ENCODE measurements at regions of chr15 and their contacts with region 1.

Region 1: DNA sequence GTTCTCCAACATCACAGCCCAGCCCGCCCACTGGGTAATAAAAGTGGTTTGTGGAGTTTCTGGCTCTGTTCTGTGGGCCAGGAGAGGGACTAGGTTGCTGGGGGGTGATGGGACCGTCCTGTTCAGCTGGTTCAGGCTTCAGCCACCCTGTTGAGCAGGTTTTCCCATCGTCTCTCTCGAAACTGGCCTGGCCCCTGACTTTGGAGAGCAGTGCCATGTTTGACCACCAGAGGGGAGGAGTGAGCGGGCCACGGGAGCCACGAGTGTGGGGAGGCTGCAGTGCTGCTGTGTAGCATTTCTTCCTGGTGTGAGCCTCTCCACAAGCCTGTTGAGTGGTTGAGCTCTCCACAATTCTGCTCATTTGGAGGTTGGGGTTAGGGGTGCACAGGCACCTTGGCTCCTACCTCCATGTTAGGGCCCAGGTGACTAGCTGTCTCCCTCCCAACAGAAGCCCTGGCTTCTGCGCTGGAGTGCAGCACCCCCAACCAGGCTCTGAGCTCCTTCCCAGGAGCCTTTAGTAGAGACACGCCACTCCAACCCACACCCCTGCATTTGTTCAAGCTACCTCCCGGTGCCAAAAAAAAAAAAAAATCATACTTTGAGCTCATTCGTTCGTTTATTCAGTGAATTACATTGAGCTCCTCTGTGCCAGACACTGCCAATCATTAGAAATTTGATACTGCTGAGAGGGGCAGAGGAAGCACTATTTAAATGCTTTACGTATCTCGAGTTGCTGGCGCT is 13.9 kb downstream of the SPINT1 start:
- DNase-seq: peak; percentile 86
- ATAC-seq: peak; percentile 91
- H3K4me3 Mint-ChIP-seq: no peak overlapping the region
- H3K27ac Mint-ChIP-seq: no peak overlapping the region
- H3K4me1 Mint-ChIP-seq: peaks cover 19% of the 10 kb centered on the region
- H3K27me3 Mint-ChIP-seq: peaks cover 3% of the 10 kb centered on the region

Region 2: DNA sequence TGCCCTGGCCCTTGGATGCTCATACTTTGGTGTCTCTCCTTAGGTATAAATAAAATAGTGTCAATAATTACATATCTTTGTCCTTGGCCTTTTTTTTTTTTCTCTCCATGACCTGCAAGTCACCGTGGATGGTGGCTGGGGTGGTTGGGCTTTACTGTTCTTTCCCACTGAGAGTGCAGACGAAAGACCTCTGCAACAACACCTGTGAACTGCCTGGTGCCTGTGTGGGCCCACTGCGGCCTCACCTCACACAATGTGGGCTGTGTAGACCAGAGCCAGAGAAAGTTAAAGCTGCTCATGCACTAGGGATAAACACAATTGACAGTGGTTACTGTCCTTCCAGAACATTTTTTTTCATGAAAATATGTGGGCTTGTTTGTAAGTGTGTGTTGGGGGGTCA is 331.9 kb before region 1 on chr15:
- CTCF ChIA-PET with region 1: no interaction called
- POLR2A ChIA-PET with region 1: no interaction called
- DNase-seq: no peak
- ATAC-seq: no peak
- H3K4me3 Mint-ChIP-seq: no peak overlapping the region
- H3K27ac Mint-ChIP-seq: no peak overlapping the region
- H3K4me1 Mint-ChIP-seq: no peaks in the 10 kb centered on the region
- H3K27me3 Mint-ChIP-seq: peaks cover 2% of the 10 kb centered on the region

Region 3: DNA sequence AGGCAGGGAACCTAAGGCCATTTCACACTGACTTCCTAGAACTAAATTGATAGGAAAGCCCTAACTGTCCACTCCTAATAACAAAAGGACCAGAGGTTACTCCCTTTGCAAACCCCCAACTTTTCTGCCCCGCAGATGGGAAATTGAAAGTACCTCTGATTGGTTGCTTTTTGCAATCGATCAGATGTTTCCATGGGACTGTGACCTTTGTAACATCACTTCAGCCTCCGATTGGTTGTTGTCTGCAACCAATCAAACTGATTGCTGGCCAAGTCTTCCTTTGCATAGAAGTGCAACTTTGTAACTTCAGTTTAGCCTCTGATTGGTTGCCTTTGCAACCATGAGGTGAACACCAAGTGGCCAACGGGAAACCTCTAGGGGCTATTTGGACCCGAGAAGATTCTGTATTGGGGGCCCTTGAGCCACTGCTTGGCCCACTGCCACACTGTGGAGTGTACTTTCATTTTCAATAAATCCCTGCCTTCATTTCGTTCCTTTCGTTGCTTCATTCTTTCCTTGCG is 275.0 kb before region 1 on chr15:
- CTCF ChIA-PET with region 1: no interaction called
- POLR2A ChIA-PET with region 1: no interaction called
- DNase-seq: no peak
- ATAC-seq: no peak
- H3K4me3 Mint-ChIP-seq: no peak overlapping the region
- H3K27ac Mint-ChIP-seq: no peak overlapping the region
- H3K4me1 Mint-ChIP-seq: peaks cover 5% of the 10 kb centered on the region
- H3K27me3 Mint-ChIP-seq: peaks cover 3% of the 10 kb centered on the region

Region 4: GRCh38 chr15:40684381-40684780 is 173.4 kb before region 1 on chr15:
- CTCF ChIA-PET with region 1: interaction called, 11 read pairs
- POLR2A ChIA-PET with region 1: no interaction called
- DNase-seq: no peak
- ATAC-seq: no peak
- H3K4me3 Mint-ChIP-seq: no peak overlapping the region
- H3K27ac Mint-ChIP-seq: no peak overlapping the region
- H3K4me1 Mint-ChIP-seq: no peaks in the 10 kb centered on the region
- H3K27me3 Mint-ChIP-seq: no peaks in the 10 kb centered on the region

Region 5: DNA sequence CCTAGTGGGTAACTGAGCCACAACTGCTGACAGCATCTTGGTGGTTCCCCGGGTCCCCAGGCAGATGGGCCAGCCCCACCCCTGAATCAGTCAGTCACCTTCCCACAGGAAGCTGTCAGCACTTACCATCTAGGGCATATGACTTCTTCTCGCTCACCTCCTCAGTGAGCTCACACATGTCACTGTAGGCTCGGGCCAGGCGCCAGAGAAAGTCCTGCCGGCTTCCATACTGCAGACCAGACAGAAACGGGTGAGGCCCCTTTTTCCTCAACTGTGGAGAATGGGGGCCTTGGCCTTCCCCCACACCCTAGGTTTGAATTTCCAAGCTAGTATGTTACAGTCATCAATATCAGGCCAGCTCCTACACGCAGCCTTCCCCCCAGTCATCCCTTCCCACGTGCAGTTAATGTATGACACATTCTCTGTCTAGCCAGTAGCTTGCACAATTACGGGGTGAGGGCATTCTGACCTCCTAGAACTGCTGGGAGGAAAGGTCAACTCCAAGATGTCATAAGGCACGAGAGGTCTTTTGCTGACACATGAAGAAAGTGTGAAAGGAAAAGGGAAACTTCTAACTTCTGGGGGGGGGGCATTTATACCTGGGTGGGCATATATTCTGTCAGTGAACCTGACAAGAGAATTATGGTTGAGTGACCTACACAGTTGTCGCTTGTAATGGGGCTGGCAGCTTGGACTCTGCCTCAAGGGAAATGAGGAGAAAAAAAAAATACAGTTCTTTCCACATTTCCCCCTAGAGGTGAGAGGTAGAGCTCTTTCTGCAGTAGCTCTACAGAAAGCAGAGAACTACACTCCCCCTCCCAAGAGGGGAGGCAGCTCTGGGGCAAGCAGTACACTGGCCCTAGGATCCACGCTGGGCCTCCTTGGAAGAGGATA is 113.6 kb before region 1 on chr15:
- CTCF ChIA-PET with region 1: interaction called, 15 read pairs
- POLR2A ChIA-PET with region 1: no interaction called
- DNase-seq: peak; percentile 85
- ATAC-seq: peak; percentile 94
- H3K4me3 Mint-ChIP-seq: peak overlapping the region; percentile 35
- H3K27ac Mint-ChIP-seq: peak overlapping the region; percentile 87
- H3K4me1 Mint-ChIP-seq: peaks cover 45% of the 10 kb centered on the region
- H3K27me3 Mint-ChIP-seq: no peaks in the 10 kb centered on the region

Region 6: GRCh38 chr15:40838776-40839175 is 19.0 kb before region 1 on chr15:
- CTCF ChIA-PET with region 1: interaction called, 79 read pairs
- POLR2A ChIA-PET with region 1: no interaction called
- DNase-seq: no peak
- ATAC-seq: no peak
- H3K4me3 Mint-ChIP-seq: no peak overlapping the region
- H3K27ac Mint-ChIP-seq: no peak overlapping the region
- H3K4me1 Mint-ChIP-seq: peaks cover 4% of the 10 kb centered on the region
- H3K27me3 Mint-ChIP-seq: peaks cover 23% of the 10 kb centered on the region

Region 7: GRCh38 chr15:40847205-40847961 is 10.4 kb before region 1 on chr15:
- CTCF ChIA-PET with region 1: interaction called, 79 read pairs
- POLR2A ChIA-PET with region 1: no interaction called
- DNase-seq: no peak
- ATAC-seq: no peak
- H3K4me3 Mint-ChIP-seq: no peak overlapping the region
- H3K27ac Mint-ChIP-seq: no peak overlapping the region
- H3K4me1 Mint-ChIP-seq: peaks cover 28% of the 10 kb centered on the region
- H3K27me3 Mint-ChIP-seq: peaks cover 16% of the 10 kb centered on the region

Region 8: GRCh38 chr15:40893733-40894688 is 36.2 kb after region 1 on chr15 and contains the start of gene VPS18:
- CTCF ChIA-PET with region 1: interaction called, 6 read pairs
- POLR2A ChIA-PET with region 1: interaction called, 22 read pairs
- DNase-seq: peak; percentile 99
- ATAC-seq: peak; percentile 98
- H3K4me3 Mint-ChIP-seq: peak within 1 kb of the TSS; percentile 100
- H3K27ac Mint-ChIP-seq: peak within 1 kb of the TSS; percentile 98
- H3K4me1 Mint-ChIP-seq: peaks cover 42% of the 10 kb centered on the region
- H3K27me3 Mint-ChIP-seq: peaks cover 13% of the 10 kb centered on the region
- total RNA-seq, gene VPS18: 17.8 to 18.4 TPM

Region 9: DNA sequence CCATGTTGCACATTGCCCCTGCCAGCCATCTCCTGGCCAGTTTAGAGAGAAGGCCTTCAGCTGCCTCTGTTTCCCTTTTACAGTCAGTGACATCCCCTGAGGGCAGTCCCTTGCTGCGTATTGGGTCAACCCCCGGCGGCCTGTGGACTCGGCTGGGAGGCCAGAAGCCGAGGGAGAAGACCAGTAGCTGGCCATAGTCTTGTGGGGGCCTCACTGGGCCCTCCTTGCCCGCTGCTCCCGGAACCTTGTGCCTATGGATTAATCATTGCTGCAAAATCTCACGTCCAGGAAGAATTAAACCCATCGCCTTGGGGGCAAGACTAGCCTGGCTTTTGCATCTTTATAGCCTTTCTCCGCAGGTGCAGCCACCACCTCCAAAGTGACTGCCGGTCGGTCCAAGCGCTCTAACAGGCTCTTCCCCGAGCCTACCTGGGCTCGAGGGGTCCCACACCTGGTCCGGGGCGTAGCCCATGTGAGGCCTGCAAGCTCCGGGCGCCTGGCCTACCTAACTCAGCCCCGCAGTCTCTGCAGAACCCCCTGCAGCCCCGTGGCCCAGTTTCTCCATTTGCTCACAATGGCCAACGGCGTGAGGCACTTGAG is 94.6 kb after region 1 on chr15:
- CTCF ChIA-PET with region 1: no interaction called
- POLR2A ChIA-PET with region 1: no interaction called
- DNase-seq: no peak
- ATAC-seq: no peak
- H3K4me3 Mint-ChIP-seq: peak overlapping the region; percentile 91
- H3K27ac Mint-ChIP-seq: peak overlapping the region; percentile 90
- H3K4me1 Mint-ChIP-seq: peaks cover 39% of the 10 kb centered on the region
- H3K27me3 Mint-ChIP-seq: peaks cover 6% of the 10 kb centered on the region

Region 10: DNA sequence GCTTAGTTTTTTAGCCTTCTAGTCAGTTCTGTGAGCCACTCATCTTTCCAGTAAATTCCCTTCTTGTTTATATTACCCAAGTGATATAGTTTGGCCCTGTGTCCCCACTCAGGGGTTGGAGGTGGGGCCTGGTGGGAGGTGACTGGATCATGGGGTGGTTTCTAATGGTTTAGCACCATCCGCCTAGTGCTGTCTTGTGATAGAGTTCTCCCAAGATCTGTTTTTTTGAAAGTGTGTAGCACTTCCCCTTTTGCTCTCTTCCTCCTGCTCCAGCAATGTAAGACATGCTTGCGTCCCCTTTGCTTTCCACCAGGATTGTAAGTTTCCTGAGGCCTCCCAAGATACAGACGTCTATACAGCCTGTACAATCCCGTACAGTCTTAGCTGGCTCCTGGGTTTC is 312.0 kb after region 1 on chr15:
- CTCF ChIA-PET with region 1: no interaction called
- POLR2A ChIA-PET with region 1: no interaction called
- DNase-seq: no peak
- ATAC-seq: no peak
- H3K4me3 Mint-ChIP-seq: no peak overlapping the region
- H3K27ac Mint-ChIP-seq: no peak overlapping the region
- H3K4me1 Mint-ChIP-seq: no peaks in the 10 kb centered on the region
- H3K27me3 Mint-ChIP-seq: no peaks in the 10 kb centered on the region

Measured in activated CD8-positive, alpha-beta T cell treated with anti-CD3 and anti-CD28 coated beads, Interleukin-2, amount 10 ng/mL, durations not matched to agents 7 days and 5 days (primary cell).